GM23248 (cell line): ENCODE measurements at regions of chr9 and their contacts with region 1.

Region 1: GRCh38 chr9:5593904-5594303 is 35.0 kb upstream of the RIC1 start:
- DNase-seq: no peak
- H3K4me3 ChIP-seq: no peak overlapping the region
- H3K27ac ChIP-seq: no peak overlapping the region
- H3K4me1 ChIP-seq: no peaks in the 10 kb centered on the region
- H3K27me3 ChIP-seq: no peaks in the 10 kb centered on the region

Region 2: DNA sequence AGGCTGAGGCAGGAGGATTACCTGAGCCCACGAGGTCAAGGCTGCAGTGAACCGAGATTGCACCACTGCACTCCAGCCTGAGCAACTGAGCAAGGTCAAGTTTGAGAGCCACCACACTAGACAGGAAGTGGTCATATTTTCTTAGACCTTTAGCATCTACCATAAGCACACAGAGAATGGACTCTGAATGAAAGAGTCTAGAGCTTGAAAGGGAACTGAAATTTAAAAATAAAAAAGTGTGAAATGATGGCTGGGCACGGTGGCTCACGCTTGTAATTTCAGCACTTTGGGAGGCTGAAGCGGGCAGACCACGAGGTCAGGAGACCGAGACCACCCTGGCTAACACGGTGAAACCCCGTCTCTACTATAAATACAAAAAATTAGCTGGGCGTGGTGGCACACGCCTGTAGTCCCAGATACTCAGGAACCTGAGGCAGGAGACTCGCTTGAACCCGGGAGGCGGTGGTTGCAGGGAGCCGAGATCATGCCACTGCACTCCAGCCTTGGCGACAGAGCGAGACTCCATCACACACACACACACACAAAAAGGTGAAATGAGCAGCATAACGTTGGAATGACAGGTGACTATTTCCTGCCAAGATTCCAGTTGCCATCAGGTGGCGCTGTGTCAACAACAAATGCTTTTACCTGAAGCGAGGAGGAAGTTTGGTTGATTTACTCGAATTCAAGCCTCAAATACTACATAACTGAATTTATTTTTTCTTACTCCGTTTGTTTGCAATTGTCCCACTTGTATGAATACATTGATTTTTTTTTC is 831.6 kb before region 1 on chr9:
- in situ Hi-C with region 1: loop called (anchors 10 kb)
- DNase-seq: peak; percentile 69
- H3K4me3 ChIP-seq: no peak overlapping the region
- H3K27ac ChIP-seq: no peak overlapping the region
- H3K4me1 ChIP-seq: peaks cover 3% of the 10 kb centered on the region; the same call in 1 of the 2 replicates
- H3K27me3 ChIP-seq: no peaks in the 10 kb centered on the region; the same call in 1 of the 2 replicates

Region 3: GRCh38 chr9:5186416-5187169 is 407.3 kb before region 1 on chr9:
- in situ Hi-C with region 1: loop called (anchors 5 kb)
- DNase-seq: peak; percentile 74
- H3K4me3 ChIP-seq: no peak overlapping the region
- H3K27ac ChIP-seq: no peak overlapping the region
- H3K4me1 ChIP-seq: no peaks in the 10 kb centered on the region
- H3K27me3 ChIP-seq: peaks cover 3% of the 10 kb centered on the region; the same call in 1 of the 2 replicates

Region 4: GRCh38 chr9:5263351-5264218 is 330.3 kb before region 1 on chr9:
- in situ Hi-C with region 1: no loop called
- DNase-seq: peak; percentile 30
- H3K4me3 ChIP-seq: no peak overlapping the region
- H3K27ac ChIP-seq: no peak overlapping the region
- H3K4me1 ChIP-seq: peaks cover 6% of the 10 kb centered on the region
- H3K27me3 ChIP-seq: no peaks in the 10 kb centered on the region

Region 5: DNA sequence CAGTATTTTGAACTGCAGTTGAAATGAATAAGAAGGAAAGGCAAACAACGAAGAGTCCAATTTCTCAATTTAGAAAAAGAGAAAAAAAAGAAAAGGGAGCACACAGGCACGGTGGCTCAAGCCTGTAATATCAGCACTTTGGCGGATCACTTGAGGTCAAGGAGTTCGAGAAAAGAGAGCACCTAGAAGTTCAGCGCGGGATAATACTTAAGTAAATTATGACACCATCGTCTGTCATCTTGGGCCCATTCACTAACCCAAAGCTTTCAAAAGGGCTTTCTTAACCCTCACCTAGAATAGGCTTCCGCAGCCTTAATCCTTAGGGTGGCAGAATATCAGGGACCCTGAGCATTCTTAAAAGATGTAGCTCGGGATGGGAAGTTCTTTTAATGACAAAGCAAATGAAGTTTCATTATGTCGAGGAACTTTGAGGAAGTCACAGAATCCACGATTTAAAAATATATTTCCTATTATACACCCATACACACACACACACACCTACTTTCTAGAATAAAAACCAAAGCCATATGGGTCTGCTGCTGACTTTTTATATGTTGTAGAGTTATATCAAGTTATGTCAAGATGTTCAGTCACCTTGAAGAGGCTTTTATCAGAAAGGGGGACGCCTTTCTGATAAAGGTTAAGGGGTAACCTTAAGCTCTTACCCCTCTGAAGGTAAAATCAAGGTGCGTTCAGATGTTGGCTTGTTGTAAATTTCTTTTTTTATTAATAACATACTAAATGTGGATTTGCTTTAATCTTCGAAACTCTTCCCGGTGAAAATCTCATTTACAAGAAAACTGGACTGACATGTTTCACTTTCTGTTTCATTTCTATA is 144.2 kb before region 1 on chr9:
- in situ Hi-C with region 1: loop called (anchors 5 kb)
- DNase-seq: peak; percentile 50
- H3K4me3 ChIP-seq: peak overlapping the region; percentile 77
- H3K27ac ChIP-seq: peak overlapping the region; percentile 54
- H3K4me1 ChIP-seq: peaks cover 46% of the 10 kb centered on the region
- H3K27me3 ChIP-seq: no peaks in the 10 kb centered on the region